ENCODE measurements at regions of chr5 and their contacts with region 1.

Region 1: DNA sequence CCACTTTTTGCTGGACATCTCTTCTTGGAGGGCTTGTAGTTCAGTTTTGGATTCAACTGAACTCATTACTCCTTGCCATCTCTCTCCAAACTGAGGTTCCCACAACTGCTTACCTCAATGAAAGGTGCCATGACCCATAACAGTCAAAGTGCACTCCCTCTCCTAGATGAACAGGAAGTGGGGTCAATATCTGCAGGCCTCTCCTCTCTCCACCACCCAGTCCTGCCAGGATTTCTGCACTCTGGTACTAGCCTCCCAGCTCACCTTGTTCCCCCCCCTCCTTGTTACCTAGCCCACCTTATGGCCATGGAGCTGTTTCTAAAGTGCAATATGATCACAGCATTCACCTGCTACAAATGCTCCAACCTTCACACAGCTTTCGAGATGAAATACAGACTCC is 5.9 kb downstream of the LHFPL2 start:
- DNase-seq: no peak
- H3K4me3 ChIP-seq: no peak overlapping the region
- H3K27ac ChIP-seq: no peak overlapping the region
- H3K4me1 ChIP-seq: peaks cover 0 to 19% of the 10 kb centered on the region in 2 donors
- H3K27me3 ChIP-seq: no peaks in the 10 kb centered on the region
- CTCF ChIP-seq: no peak
- POLR2A ChIP-seq: no peak

Region 2: DNA sequence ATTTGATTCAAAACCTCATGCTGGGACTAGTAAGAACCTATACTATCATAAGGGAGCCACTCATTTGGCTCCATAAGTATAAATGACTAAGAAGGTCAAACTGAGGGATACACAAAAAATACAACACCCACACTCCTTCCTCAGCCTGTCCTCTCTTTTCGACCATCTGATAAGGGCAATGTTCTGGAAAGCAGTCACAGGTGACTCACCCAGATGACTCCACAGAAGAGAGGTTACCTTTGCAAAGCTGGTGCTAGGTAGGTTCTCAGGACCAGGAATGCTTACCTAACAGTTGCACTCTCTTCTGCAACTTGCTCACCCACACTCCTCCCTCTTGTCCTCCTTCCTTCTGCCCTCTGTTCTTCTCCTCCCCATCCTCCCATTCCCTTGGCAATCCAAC is 27.0 kb before region 1 on chr5:
- intact Hi-C with region 1: loop called (anchors 1 kb)
- DNase-seq: no peak
- H3K4me3 ChIP-seq: no peak overlapping the region
- H3K27ac ChIP-seq: peak overlapping the region; percentile 15 to 40
- H3K4me1 ChIP-seq: no peaks in the 10 kb centered on the region
- H3K27me3 ChIP-seq: no peaks in the 10 kb centered on the region
- CTCF ChIP-seq: no peak
- POLR2A ChIP-seq: no peak